Activated CD8-positive, alpha-beta memory T cell treated with anti-CD3 and anti-CD28 coated beads, Interleukin-2, amount 10 ng/mL, durations not matched to agents 7 days and 5 days (primary cell): ENCODE measurements at regions of chr16 and their contacts with region 1.

Region 1: DNA sequence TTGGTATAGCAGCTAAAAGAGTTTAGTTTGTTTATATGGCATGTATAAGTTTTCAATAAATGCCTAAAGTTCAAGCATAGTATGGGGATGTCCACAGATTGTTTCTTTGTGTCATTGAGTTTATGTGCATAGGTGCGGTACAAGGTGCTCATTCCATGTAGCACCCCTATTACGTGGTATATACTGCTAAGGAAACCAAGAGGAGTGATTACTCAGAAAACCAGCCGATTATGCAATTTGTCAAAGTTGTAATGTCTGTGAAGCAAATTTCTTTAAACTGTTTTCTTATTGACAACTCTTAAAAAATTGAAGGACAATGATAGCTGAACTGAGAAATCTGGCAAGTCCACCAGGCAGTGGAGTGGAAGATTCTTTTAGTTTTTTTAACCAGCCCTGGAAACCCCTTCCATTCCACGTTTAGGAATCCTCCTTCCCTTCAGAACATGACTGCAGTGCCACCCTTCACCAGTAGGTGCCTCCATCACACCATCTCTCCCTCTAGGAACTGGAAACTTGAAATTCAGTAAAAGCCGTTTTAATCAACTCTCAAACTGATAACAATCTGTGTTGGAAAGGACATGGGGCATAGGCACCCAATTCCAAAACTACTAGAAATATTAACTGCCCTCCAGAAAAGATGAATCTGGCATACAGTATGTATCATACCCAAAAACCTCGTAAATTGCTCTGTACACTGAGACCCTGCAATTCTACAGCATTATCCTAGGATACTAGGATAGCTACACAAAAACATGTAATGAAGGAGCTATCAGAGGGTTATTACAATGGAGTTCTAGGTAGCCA is 43.5 kb downstream of the REXO5 start:
- DNase-seq: peak; percentile 74
- ATAC-seq: peak; percentile 63
- H3K4me3 Mint-ChIP-seq: no peak overlapping the region
- H3K27ac Mint-ChIP-seq: peak overlapping the region; percentile 37
- H3K4me1 Mint-ChIP-seq: peaks cover 45% of the 10 kb centered on the region
- H3K27me3 Mint-ChIP-seq: no peaks in the 10 kb centered on the region

Region 2: DNA sequence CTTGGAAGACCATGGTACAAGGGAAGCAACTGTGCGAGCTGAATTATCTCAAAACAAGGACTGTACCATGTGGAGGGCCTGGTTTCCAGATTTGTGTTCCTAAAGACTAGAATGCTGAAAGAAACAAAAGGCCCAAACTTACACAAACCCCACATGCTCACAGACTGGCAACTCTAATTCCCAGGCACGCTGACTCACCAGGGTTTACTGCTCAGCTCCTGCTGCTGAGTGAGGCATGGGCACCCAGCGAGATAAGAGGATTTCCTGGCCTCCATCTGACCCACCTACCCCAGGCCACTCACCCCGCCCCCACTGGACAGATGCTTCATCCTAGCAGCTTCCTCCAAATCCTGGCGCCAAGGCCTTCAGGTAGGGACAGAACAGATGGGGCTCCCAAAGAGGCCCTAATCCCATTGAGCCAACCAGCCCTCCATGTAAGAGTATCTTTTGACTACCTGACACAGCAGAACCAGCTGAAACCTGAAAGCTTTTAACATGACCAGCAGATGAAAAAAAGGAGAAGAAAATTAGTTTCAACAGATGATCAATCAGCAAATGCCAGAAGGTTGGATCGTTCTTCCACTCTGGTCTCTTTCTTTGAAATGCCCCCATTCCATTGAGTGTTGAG is 16.5 kb after region 1 on chr16:
- CTCF ChIA-PET with region 1: interaction called, 15 read pairs
- DNase-seq: peak; percentile 43
- ATAC-seq: peak; percentile 47
- H3K4me3 Mint-ChIP-seq: no peak overlapping the region
- H3K27ac Mint-ChIP-seq: peak overlapping the region; percentile 86
- H3K4me1 Mint-ChIP-seq: peaks cover 73% of the 10 kb centered on the region
- H3K27me3 Mint-ChIP-seq: no peaks in the 10 kb centered on the region

Region 3: DNA sequence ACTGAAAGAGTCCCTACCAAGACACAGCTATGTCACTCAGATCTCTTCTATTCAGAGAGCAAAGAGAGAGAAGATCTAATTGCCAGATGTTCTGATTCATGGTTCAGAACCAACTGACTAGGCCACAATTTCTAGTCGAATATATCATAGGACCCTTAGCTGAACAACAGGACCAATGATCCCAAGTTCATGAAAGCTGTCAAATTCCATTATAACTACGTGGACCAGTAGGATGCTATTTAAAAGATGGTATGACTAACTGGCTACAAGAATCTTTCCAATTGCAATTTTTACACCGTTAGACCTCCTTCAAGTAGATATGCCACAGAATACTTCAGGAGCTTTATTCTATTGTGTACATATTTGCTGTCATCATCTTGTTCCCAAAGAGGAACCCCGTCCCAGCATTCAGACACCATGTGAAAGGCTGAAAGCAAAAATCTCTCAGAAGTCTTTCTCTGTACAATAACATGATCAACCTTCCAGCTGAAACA is 24.3 kb after region 1 on chr16:
- CTCF ChIA-PET with region 1: interaction called, 28 read pairs
- DNase-seq: no peak
- ATAC-seq: peak; percentile 5
- H3K4me3 Mint-ChIP-seq: peak overlapping the region; percentile 66
- H3K27ac Mint-ChIP-seq: peak overlapping the region; percentile 98
- H3K4me1 Mint-ChIP-seq: peaks cover 89% of the 10 kb centered on the region
- H3K27me3 Mint-ChIP-seq: no peaks in the 10 kb centered on the region

Region 4: GRCh38 chr16:20910781-20911321 is 61.1 kb after region 1 on chr16:
- CTCF ChIA-PET with region 1: interaction called, 12 read pairs
- DNase-seq: no peak
- ATAC-seq: peak; percentile 73
- H3K4me3 Mint-ChIP-seq: peak overlapping the region; percentile 45
- H3K27ac Mint-ChIP-seq: peak overlapping the region; percentile 82
- H3K4me1 Mint-ChIP-seq: peaks cover 70% of the 10 kb centered on the region
- H3K27me3 Mint-ChIP-seq: no peaks in the 10 kb centered on the region

Region 5: DNA sequence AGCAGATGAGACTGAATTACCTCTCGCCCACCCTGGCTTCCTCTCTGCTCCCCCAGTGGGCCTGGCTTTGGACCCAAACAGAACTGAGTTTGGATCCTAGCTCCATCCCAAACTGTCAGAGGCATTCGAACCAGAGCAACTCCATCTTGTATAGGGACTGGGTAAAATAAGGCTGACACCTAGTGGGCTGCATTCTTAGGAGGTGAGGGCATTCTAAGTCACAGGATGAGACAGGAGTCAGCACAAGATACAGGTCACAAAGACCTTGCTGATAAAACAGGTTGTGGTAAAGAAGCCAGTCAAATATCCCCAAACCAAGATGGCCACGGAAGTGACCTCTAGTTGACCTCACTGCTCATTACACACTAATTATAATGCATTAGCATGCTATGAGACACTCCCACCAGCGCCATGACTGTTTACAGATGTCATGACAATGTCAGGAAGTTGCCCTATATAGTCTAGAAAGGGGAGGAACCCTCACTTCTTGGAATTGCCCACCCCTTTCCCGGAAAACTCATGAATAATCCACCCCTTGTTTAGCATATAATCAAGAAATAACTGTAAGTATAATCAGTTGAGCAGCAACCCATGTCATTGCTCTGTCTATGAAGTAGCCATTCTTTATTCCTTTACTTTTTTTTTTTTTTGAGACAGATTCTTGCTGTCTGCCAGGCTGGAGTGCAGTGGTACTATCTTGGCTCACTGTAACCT is 95.2 kb after region 1 on chr16:
- CTCF ChIA-PET with region 1: interaction called, 11 read pairs
- DNase-seq: peak; percentile 93
- ATAC-seq: peak; percentile 79
- H3K4me3 Mint-ChIP-seq: no peak overlapping the region
- H3K27ac Mint-ChIP-seq: peak overlapping the region; percentile 88
- H3K4me1 Mint-ChIP-seq: peaks cover 54% of the 10 kb centered on the region
- H3K27me3 Mint-ChIP-seq: no peaks in the 10 kb centered on the region

Region 6: DNA sequence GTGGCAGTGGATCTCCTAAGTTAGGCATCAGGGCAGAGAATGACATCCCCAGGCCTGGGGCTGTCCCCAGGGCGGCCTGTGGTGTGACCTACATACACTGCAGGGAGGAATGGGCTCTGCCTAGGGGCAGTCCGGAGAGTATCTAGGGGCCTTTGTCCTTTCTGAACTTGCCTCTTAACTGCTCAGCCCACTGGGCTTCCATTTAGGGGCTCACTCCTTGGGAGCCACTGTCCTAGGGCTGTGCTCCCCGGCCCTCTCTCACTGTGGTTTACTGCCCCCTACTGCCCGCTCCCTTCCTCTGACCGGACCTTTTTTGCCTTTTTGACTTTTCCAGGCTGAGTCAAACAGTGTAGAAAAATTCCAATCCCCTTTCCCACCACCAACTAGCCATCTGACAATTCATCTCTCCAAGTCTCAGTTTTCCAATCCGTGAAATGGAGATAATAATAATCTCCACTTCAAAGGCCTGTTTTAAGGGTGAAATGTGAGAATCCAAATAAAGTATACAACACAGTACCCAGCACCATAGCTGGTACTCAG is 234.0 kb after region 1 on chr16:
- CTCF ChIA-PET with region 1: interaction called, 87 read pairs
- DNase-seq: peak; percentile 65
- ATAC-seq: peak; percentile 85
- H3K4me3 Mint-ChIP-seq: no peak overlapping the region
- H3K27ac Mint-ChIP-seq: no peak overlapping the region
- H3K4me1 Mint-ChIP-seq: peaks cover 5% of the 10 kb centered on the region
- H3K27me3 Mint-ChIP-seq: peaks cover 15% of the 10 kb centered on the region